ENCODE measurements at regions of chr4 and their contacts with region 1.

Region 1: DNA sequence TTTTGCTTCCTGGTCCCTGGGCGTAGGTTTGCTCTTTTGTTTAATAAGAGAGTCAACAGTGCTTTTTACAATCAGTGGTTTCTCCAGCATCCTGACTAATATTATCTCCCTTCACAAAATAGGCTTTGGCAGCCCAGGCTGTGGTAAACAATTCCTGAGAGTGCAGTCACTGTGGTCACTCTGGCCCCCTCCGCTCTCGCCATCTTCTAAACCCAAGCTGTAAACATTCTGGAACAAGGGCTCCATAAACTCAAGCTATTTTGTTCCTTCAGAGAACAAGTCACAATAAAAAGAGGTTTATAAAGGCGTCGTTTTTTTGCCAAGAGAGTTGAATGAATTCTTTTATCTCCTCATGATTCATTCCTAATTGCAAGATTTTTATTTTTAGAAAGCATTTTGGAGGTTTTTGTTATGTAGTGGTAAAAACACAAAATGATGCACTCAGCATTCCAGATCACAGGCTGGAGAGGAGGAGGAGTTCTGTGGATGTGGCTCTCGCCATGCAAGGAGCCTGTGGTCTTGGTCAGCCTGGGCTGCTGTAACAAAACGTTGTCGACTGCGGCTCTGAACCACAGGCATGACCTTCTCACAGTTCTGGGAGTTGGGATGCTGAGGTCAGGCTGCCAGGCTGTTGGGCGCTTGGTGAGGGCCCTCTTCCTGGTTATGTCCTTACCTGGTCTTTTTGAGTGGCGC is 486.4 kb upstream of the FAT1 start:
- DNase-seq: peak; percentile 63
- H3K4me3 ChIP-seq: no peak overlapping the region
- H3K27ac ChIP-seq: no peak overlapping the region
- H3K4me1 ChIP-seq: no peaks in the 10 kb centered on the region
- H3K27me3 ChIP-seq: no peaks in the 10 kb centered on the region
- CTCF ChIP-seq: no peak

Region 2: DNA sequence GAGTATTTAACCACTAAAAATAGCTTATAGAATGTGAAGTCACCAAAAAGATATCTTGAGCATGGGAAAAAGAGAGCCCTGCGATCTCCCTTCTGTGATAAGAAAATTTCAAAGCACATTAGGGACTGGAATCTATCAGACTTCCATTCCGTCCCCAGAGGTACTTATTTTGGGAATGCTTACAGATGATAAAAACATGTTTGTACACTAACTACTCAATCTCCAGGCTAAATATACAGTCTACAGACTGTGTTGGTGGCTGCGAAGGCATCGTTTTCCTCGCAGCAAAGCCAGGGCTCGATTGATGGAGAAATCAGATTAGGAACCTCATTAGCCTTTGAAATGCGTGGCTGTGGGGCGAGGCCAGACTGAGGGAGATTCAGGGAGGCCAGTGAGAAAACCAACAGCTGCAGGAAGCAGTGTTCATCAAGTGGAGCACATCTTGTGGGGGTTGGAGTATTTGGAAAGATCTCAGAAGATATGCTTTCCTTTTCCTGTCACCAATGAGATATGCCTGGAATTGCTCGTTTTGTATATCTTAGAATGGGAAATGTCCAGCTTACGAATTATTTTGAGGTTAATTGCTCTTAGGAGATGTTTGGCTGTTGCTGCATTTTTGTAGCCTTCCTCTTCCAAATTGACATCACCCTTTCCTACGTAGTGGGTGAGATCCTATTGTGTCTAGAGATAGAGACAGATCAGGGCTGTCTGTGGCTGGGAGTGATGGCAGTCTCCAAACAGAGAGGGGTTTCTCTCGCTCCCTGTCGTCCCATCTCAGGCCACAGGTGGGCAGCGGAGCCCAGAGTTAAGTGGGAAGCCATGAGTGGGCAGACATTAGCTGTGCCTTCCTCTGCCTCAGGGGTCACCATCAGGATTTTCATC is 261.5 kb before region 1 on chr4:
- CTCF ChIA-PET with region 1: no interaction called
- dilution Hi-C with region 1: no loop called
- in situ Hi-C with region 1: no loop called
- intact Hi-C with region 1: no loop called
- DNase-seq: no peak
- H3K4me3 ChIP-seq: no peak overlapping the region
- H3K27ac ChIP-seq: no peak overlapping the region
- H3K4me1 ChIP-seq: no peaks in the 10 kb centered on the region
- H3K27me3 ChIP-seq: no peaks in the 10 kb centered on the region
- CTCF ChIP-seq: peak; percentile 26 to 29

Region 3: DNA sequence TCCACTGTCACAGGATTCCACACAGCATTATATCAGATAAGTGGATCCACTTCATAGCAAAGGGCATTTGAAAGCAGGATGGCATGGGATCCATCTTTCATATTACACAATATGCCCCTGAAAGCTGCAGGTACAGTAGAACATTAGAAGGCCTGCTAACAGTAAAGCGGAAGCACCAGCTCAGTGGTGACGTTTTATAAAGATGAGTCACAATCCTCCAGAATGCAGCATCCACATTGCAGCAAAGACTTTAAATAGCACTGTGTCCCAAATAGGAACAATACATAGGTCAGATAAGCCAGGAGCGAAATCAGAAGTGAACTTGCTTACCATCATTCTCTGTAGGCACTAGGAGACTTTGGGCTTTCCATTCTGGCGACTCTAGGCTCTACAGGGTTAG is 123.1 kb after region 1 on chr4:
- CTCF ChIA-PET with region 1: no interaction called
- dilution Hi-C with region 1: loop called (anchors 5 kb)
- in situ Hi-C with region 1: no loop called
- intact Hi-C with region 1: no loop called
- DNase-seq: no peak
- H3K4me3 ChIP-seq: no peak overlapping the region
- H3K27ac ChIP-seq: no peak overlapping the region
- H3K4me1 ChIP-seq: no peaks in the 10 kb centered on the region
- H3K27me3 ChIP-seq: no peaks in the 10 kb centered on the region
- CTCF ChIP-seq: no peak

Measured in mammary epithelial cell (primary cell).